ENCODE measurements at regions of chr7 and their contacts with region 1.

Region 1: DNA sequence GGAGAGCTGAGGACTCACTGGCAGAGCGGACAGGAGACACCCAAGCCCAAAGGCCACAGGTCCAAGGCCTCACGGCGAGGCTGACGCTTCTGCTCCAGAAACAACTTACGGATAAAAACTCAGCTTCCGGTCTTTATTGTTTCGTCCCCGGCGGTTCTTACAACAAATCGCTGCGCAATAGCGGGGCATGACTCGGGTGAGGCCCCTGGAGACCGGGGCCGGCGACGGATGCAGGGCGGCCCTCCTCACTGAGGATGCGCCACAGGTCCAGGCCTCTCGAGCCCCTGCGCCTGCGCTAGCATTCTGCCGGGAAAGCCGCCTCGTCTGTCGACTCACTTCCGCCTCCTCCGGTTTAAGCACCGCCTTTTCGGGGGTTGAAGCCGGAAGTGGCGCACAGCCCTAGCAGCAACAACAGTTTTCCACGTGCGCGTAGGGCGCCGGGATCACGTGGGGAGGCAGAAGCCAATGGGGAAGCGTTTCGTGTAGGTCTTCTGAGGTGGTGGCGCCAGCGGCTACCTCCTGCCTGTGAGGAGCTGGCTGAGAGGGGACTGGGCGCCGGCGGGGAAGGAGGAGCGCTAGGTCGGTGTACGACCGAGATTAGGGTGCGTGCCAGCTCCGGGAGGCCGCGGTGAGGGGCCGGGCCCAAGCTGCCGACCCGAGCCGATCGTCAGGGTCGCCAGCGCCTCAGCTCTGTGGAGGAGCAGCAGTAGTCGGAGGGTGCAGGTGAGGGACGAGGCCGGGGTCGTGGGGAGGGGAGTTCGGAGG is at the starts of genes DNAJB9 and THAP5:
- DNase-seq: peak; percentile 99
- ATAC-seq: peak; percentile 94
- H3K4me3 ChIP-seq: peak within 1 kb of the TSS; percentile 81 to 90
- H3K27ac ChIP-seq: peak within 1 kb of the TSS; percentile 75
- H3K4me1 ChIP-seq: peaks cover 8 to 12% of the 10 kb centered on the region in 2 experiments
- H3K27me3 ChIP-seq: no peaks in the 10 kb centered on the region
- CTCF ChIP-seq: no peak
- POLR2A ChIP-seq: peak; percentile 67
- RAD21 ChIP-seq: no peak
- total RNA-seq, gene DNAJB9: 10.1 TPM
- total RNA-seq, gene THAP5: 29.3 TPM

Region 2: DNA sequence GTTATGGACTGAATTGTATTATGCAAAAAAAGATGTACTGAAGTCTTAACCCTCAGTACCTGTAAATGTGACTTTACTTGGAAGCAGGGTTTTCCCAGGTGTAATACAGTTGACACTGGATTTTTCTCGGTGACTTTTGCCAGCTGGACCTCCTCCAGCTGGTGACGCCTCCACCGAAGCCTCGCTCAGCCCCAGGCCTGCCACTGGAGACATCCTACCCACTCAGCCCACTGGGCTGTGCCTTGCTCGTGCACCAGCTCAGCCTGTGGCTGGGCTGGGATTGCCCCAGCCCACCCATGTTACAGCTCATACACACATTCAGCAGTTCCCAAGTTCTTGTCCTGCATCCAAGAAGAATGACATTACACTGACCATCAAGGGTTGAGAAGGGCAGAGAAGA is 1142.1 kb before region 1 on chr7:
- CTCF ChIA-PET with region 1: no interaction called
- POLR2A ChIA-PET with region 1: no interaction called
- RAD21 ChIA-PET with region 1: no interaction called
- intact Hi-C with region 1: no loop called
- DNase-seq: no peak
- ATAC-seq: no peak
- H3K4me3 ChIP-seq: no peak overlapping the region
- H3K27ac ChIP-seq: no peak overlapping the region
- H3K4me1 ChIP-seq: no peaks in the 10 kb centered on the region
- H3K27me3 ChIP-seq: no peaks in the 10 kb centered on the region
- CTCF ChIP-seq: no peak
- POLR2A ChIP-seq: no peak
- RAD21 ChIP-seq: no peak

Region 3: DNA sequence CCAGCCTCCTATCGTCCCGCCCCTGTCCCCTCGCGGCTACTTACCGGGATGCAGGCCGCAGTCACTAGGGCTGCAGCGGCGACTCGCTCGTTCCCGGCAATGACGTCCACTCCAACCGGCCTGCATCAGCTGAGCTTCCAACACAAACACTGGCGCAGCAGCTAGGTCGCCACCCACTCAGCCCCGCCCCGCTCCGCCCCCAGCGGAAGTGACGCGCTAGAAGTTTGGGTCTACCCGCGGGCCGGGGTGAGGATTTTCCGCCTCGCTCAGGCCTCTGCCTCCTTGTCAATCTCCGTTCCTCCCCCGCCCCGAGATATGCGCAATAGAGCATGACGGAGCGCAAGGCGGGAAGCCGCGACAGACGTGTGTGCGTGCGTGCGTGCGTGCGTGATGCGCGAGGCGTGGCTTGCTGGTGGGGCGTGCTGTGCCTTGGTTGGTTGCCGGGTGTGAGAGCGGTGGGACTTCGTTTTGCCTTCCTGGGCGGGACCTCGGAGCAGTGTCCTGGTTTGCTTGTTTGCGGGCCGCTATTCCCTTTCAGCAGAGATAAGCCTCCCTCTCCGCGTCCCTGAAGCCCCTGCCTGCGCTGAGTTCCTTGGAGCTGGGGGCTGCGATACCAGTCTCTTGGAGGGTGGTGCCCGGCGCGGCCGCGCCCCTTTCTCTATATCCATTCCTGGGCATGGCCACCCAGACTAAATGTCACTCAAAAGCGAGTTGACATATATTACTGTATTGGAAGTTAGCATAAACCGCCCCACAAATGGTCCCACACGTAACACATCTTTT is 43.4 kb before region 1 on chr7 and contains the start of gene PNPLA8:
- CTCF ChIA-PET with region 1: no interaction called
- POLR2A ChIA-PET with region 1: interaction called, 9 read pairs
- RAD21 ChIA-PET with region 1: no interaction called
- intact Hi-C with region 1: loop called (anchors 5 kb)
- DNase-seq: peak; percentile 98
- ATAC-seq: peak; percentile 93
- H3K4me3 ChIP-seq: peak within 1 kb of the TSS; percentile 73 to 78
- H3K27ac ChIP-seq: peak within 1 kb of the TSS; percentile 69
- H3K4me1 ChIP-seq: peaks cover 6 to 24% of the 10 kb centered on the region in 2 experiments; a peak in 3 of 4 replicates
- H3K27me3 ChIP-seq: no peaks in the 10 kb centered on the region
- CTCF ChIP-seq: no peak
- POLR2A ChIP-seq: peak; percentile 56
- RAD21 ChIP-seq: no peak
- total RNA-seq, gene PNPLA8: 12.9 TPM